ENCODE measurements at regions of chr18 and their contacts with region 1.

Region 1: GRCh38 chr18:13558124-13558523 is 168.2 kb downstream of the FAM210A start:
- DNase-seq: no peak
- H3K4me3 ChIP-seq: no peak overlapping the region
- CTCF ChIP-seq: peak; percentile 52

Region 2: GRCh38 chr18:13539050-13539449 is 19.1 kb before region 1 on chr18:
- CTCF ChIA-PET with region 1: no interaction called
- POLR2A ChIA-PET with region 1: no interaction called
- DNase-seq: no peak
- H3K4me3 ChIP-seq: no peak overlapping the region
- CTCF ChIP-seq: no peak

Region 3: GRCh38 chr18:13629841-13630715 is 72.0 kb after region 1 on chr18:
- CTCF ChIA-PET with region 1: interaction called, 11 read pairs
- POLR2A ChIA-PET with region 1: no interaction called
- DNase-seq: no peak
- H3K4me3 ChIP-seq: no peak overlapping the region
- CTCF ChIP-seq: peak; percentile 69